ENCODE measurements at regions of chr1 and their contacts with region 1.

Region 1: DNA sequence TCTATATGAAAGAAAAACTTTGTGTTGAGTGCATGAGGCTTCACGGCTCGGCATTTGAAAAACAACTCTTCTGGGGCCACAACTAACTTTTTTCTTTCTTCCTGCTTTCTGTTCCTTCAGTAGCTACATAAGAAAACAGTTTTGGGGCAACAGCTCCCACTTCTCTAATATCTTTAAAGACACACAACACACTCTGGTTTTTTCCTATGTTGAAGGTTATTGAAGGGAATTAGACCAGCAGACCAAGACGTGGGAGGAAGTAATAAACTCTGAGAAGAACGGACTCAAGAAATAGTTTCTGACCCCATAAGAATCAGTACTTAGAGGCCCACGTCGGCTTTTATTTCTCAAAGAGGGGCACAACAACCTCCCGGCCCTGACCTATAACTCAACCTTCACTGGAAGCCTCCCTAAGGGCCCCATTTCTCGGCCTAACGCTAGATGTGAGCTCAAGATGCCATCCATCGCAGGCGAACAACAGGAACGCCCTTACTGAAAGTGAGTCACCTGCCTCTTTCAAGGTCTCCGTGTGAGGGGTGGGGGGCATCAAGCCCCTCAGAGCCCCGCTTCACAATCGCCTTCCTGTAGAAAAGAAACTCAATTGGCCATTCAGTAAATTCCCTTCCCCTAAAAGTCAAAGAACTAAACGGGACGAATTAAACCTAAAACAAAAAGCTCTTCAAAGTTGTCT is 844 bp downstream of the ZMYM6 start:
- DNase-seq: peak; percentile 63
- ATAC-seq: peak; percentile 70
- H3K4me3 Mint-ChIP-seq: peak overlapping the region; percentile 92
- H3K27ac Mint-ChIP-seq: peak overlapping the region; percentile 92
- H3K4me1 Mint-ChIP-seq: peaks cover 33% of the 10 kb centered on the region
- H3K27me3 Mint-ChIP-seq: no peaks in the 10 kb centered on the region

Region 2: DNA sequence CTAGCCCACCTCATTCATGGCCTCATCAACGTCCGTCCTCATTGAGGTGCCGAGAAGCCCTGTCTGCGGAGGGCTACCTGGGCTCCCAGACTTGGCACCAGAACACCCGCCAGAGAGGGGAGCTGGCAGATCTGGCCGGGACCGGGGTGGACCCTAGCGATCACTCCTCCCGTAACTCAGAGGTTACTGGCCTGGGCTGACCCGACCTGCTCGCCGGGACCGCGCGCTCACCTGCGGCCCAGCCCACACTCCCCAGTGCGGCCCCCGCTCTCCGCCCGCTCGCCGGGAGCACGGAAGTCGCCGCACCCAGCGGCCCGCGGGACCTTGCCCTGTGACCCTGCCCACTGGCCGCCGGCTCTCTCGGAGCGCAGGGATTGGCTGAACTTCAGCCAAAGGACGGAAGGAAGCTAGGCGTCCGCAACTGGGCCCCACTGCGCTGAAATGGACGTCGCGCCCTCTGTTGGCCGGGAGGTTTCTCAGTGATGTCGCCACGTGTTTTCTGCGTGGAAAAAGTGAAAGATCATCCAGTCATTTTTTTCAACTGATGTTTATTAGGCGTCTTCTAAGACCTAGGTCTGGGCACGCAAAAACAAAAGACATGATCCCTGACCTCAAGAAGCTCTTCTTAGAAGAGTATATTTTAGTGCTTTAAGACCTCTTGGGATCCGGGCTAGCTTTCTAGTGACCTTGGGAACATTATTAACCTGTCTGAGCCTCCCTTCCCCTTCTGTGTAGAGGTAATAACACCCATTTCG is 171.3 kb before region 1 on chr1 and contains the start of gene SMIM12:
- CTCF ChIA-PET with region 1: interaction called, 6 read pairs
- POLR2A ChIA-PET with region 1: no interaction called
- intact Hi-C with region 1: loop called (anchors 1 to 2 kb)
- DNase-seq: peak; percentile 95
- ATAC-seq: peak; percentile 95
- H3K4me3 Mint-ChIP-seq: peak within 1 kb of the TSS; percentile 98
- H3K27ac Mint-ChIP-seq: peak within 1 kb of the TSS; percentile 99
- H3K4me1 Mint-ChIP-seq: peaks cover 51% of the 10 kb centered on the region
- H3K27me3 Mint-ChIP-seq: no peaks in the 10 kb centered on the region
- total RNA-seq, gene SMIM12: 42.4 to 45.0 TPM

Region 3: GRCh38 chr1:35079003-35079930 is 48.4 kb after region 1 on chr1 and contains the start of gene ZMYM1:
- CTCF ChIA-PET with region 1: interaction called, 4 read pairs
- POLR2A ChIA-PET with region 1: interaction called, 3 read pairs
- intact Hi-C with region 1: loop called (anchors 1 kb)
- DNase-seq: peak; percentile 95
- ATAC-seq: peak; percentile 97
- H3K4me3 Mint-ChIP-seq: peak within 1 kb of the TSS; percentile 88
- H3K27ac Mint-ChIP-seq: peak within 1 kb of the TSS; percentile 97
- H3K4me1 Mint-ChIP-seq: peaks cover 36% of the 10 kb centered on the region
- H3K27me3 Mint-ChIP-seq: peaks cover 5% of the 10 kb centered on the region
- total RNA-seq, gene ZMYM1: 3.3 to 5.7 TPM

Region 4: DNA sequence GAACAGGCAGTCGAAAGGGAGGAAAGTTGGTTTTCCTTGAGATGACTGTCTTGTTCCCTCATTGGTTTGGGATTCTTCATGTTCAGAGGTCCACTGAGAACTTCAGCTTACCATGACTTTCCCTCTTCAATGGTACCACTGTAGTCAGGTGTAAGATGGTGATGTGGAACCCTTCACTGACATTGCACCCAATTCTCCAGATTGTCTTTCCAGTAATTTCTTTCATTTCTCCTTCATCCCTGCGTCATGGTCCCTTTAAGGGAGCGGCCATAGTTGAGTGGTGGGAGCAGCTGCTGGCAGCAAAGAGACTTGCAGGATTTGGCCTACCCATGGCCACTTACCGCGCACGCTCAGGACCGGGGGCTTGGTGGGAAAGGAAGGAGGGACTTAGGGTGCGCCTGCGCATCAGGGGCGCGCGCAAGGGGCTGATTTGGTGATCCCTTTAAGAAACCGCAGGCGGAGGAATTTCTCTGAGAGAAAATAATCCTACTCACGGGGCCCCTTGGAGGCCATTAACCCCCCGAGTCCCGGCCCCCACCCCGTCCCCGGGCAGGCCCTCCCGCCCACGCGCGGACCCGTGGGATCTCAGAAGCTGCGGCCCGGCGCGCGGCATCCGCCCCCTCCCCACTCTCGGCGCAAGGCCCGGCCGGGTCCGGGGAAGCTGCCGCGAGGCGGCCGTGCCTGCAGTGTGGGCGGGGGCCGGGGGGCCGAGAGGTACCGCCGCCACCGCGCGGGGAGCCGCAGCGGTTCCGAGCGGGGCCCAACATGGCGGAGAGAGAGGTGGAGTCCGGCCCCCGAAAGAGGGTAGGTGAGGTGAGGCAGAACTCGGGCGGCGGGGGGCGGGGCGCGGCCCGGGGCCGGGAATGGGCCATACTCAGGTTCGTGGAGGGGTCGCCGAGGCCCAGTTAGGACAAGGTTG is 237.6 kb after region 1 on chr1 and contains the start of gene ZMYM4:
- CTCF ChIA-PET with region 1: no interaction called
- POLR2A ChIA-PET with region 1: interaction called, 5 read pairs
- intact Hi-C with region 1: loop called (anchors 1 kb)
- DNase-seq: peak; percentile 94
- ATAC-seq: peak; percentile 98
- H3K4me3 Mint-ChIP-seq: peak within 1 kb of the TSS; percentile 76
- H3K27ac Mint-ChIP-seq: peak within 1 kb of the TSS; percentile 83
- H3K4me1 Mint-ChIP-seq: peaks cover 30% of the 10 kb centered on the region
- H3K27me3 Mint-ChIP-seq: no peaks in the 10 kb centered on the region
- total RNA-seq, gene ZMYM4: 27.8 to 31.6 TPM

Region 5: GRCh38 chr1:35316264-35316663 is 285.4 kb after region 1 on chr1:
- CTCF ChIA-PET with region 1: no interaction called
- POLR2A ChIA-PET with region 1: no interaction called
- intact Hi-C with region 1: no loop called
- DNase-seq: no peak
- ATAC-seq: no peak
- H3K4me3 Mint-ChIP-seq: no peak overlapping the region
- H3K27ac Mint-ChIP-seq: no peak overlapping the region
- H3K4me1 Mint-ChIP-seq: peaks cover 2% of the 10 kb centered on the region
- H3K27me3 Mint-ChIP-seq: no peaks in the 10 kb centered on the region

Region 6: GRCh38 chr1:35390600-35391494 is 359.9 kb after region 1 on chr1:
- CTCF ChIA-PET with region 1: no interaction called
- POLR2A ChIA-PET with region 1: no interaction called
- intact Hi-C with region 1: no loop called
- DNase-seq: no peak
- ATAC-seq: no peak
- H3K4me3 Mint-ChIP-seq: no peak overlapping the region
- H3K27ac Mint-ChIP-seq: no peak overlapping the region
- H3K4me1 Mint-ChIP-seq: no peaks in the 10 kb centered on the region
- H3K27me3 Mint-ChIP-seq: no peaks in the 10 kb centered on the region